Activated T-helper 2 cell treated with anti-CD3 and anti-CD28 coated beads, Interferon-gamma antibody, Interleukin-2, Interleukin-4, amounts not matched to agents 10 μg/mL and 5 μg/mL and 100 μg/mL, durations not matched to agents 14 hours and 24 hours and 36 hours (primary cell): ENCODE measurements at regions of chr4 and their contacts with region 1.

Region 1: DNA sequence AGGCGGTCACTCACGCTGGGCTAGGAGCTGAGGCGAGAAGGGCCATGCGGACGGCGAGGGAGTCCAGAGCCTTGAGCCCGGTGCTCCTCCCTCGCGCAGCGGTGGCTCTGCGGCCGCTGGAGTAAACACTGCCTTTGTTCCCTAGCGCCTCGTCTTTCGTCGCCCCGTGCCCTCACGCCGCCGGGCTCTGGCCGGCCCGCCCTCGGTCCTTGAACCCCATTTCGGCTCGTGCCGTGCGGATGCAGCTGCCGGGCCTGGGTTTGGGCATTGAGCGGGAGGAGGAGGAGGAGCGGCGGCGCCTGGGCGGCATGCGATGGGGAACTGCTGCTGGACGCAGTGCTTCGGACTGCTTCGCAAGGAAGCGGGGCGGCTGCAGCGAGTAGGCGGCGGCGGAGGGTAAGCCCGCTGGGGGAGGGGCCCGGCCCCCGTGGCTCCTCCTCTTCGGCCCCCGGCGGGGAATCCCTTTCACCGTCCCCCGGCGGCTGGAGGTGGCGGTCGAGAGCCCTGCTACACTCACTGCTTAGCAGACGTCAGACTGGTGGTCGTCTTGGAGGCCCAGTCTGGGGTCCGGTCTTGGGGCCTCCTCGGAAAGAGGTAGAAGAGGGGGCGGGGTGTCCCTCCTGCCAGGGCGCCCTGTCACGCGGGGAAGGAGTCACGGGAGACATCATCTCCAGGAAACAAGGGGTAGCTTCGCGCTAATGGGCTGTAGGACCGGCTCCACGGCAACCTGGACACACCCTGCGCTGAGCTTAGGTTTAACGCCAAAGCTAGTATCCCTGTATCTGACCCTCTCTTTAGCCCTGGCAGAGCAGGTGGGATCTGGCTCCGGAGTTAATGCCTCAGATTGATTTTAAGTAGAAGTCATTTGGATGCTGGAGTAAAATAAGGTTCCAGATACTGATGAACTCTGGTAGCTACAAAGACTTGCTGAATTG is at the start of gene AP1AR:
- DNase-seq: peak; percentile 77
- H3K4me3 Mint-ChIP-seq: peak within 1 kb of the TSS; percentile 90
- H3K27ac Mint-ChIP-seq: peak within 1 kb of the TSS; percentile 94
- H3K4me1 Mint-ChIP-seq: peaks cover 32% of the 10 kb centered on the region
- H3K27me3 Mint-ChIP-seq: peaks cover 6% of the 10 kb centered on the region
- total RNA-seq, gene AP1AR: 19.3 and 21.7 TPM in 2 replicates

Region 2: DNA sequence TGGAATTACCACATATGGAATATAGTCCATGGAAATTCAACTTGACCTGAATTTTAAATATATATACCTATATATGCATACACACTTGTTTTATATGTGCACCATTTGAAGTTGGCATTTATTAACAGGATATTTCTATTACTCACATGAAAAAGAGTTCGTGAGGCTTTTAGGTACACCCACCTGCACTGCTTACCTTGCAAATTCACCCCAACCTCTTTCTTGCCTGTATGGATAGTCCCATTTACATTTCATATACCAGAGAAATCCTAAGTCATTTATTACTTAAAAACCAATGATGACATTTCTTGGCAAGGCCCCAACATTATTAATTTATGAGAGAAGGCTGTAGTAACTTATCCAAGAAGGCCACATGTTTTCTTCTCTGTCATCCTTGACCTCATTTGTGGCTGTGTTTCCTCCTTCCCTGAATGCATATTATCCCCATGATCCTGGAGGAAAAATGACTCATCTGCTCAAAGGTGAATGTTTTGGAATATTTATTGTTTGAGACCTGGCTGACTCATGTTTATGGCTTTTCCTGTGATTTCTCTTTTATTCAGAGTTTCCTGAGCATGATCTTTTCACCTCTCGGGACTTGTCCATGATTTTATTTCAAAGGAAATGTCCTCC is 149.0 kb before region 1 on chr4:
- intact Hi-C with region 1: no loop called
- DNase-seq: no peak
- H3K4me3 Mint-ChIP-seq: no peak overlapping the region
- H3K27ac Mint-ChIP-seq: no peak overlapping the region
- H3K4me1 Mint-ChIP-seq: peaks cover 7% of the 10 kb centered on the region
- H3K27me3 Mint-ChIP-seq: peaks cover 26% of the 10 kb centered on the region

Region 3: DNA sequence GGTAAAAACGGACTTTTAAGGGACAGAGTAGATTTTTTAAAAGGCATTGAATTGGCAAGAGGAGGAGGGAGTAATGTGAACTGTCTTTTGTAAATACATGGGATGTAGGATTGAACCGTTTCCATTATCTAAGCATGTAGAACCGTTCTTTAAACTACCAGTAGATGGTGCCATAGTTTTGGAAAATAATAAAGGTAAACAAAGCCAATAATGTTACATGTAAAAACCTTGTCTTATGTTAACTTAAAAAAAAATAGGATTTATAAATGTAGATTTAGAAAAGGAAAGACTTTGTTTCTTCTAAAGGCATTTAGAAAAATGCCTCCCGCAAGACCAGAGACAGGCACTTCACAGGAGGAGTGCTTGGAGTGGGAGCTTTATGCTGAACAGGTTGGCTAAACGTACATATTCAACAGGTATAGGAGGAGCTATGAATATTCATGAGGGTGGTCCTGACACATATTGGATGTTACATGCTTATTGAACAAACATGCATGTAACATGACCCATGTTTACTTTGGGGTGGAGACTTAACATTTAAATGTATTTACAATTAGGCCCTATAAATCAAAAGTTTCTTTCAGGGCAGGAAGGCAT is 132.2 kb before region 1 on chr4:
- intact Hi-C with region 1: loop called (anchors 1 kb)
- DNase-seq: no peak
- H3K4me3 Mint-ChIP-seq: no peak overlapping the region
- H3K27ac Mint-ChIP-seq: no peak overlapping the region
- H3K4me1 Mint-ChIP-seq: peaks cover 5% of the 10 kb centered on the region
- H3K27me3 Mint-ChIP-seq: peaks cover 22% of the 10 kb centered on the region

Region 4: GRCh38 chr4:112145820-112146813 is 85.9 kb before region 1 on chr4:
- intact Hi-C with region 1: loop called (anchors 1 kb)
- DNase-seq: peak; percentile 44
- H3K4me3 Mint-ChIP-seq: peak overlapping the region; percentile 85
- H3K27ac Mint-ChIP-seq: peak overlapping the region; percentile 92
- H3K4me1 Mint-ChIP-seq: peaks cover 35% of the 10 kb centered on the region
- H3K27me3 Mint-ChIP-seq: no peaks in the 10 kb centered on the region

Region 5: DNA sequence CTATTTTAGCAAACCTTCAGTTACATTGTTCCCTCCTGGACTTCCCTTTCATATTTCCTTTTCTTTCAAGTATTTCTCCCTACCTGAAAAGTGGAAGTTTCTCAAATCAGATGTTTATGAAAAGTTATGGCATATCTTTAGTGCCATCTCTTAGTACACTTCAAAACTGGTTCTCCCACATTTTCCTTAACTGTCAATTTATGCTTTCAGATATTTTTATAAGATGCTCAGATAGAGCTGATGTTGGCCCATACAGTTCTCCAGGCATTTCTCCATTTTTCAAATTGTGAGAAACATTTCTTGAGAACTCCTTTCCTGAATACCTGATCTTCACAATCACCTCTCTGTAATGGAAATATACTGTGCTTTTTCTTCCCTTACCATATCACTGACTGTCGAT is 33.0 kb before region 1 on chr4:
- intact Hi-C with region 1: loop called (anchors 1 kb)
- DNase-seq: no peak
- H3K4me3 Mint-ChIP-seq: no peak overlapping the region
- H3K27ac Mint-ChIP-seq: no peak overlapping the region
- H3K4me1 Mint-ChIP-seq: peaks cover 17% of the 10 kb centered on the region
- H3K27me3 Mint-ChIP-seq: peaks cover 2% of the 10 kb centered on the region

Region 6: DNA sequence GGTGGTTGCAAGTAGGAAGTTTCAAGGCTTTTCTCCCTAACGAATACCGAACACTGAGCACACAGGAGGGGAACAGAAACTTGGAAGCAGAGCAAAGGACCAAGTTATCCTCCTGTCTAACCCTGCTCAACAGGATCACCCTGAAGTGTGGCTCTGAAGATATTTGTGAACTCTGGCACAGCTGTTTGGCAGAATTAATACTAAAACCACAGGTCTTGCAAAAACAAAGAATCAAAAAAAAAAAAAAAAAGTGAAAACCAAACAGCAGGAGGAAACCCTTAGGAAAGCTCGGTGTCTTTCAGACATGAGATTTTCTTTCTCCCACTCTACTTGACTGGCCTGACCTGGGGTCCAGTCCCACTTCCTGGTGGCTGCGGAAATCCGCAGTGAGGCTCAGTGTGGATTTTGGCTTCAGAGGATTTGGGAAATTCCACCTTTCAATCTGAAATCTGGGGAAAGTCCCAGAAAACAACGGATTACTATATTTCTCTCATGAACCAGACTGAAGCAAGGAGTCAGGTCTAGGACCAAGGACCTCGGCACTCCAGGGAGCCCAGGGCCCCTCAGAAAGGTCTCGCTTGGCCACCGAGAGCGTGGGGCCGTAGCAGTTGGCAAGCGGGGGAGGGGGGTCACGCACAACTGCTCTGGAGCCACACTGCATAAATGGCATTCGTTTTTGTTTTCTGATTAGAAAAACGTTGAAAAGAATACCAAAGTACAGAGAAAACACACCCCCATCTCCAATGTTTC is 52.8 kb after region 1 on chr4:
- intact Hi-C with region 1: loop called (anchors 1 kb)
- DNase-seq: no peak
- H3K4me3 Mint-ChIP-seq: peak overlapping the region; percentile 86
- H3K27ac Mint-ChIP-seq: peak overlapping the region; percentile 78
- H3K4me1 Mint-ChIP-seq: peaks cover 63% of the 10 kb centered on the region
- H3K27me3 Mint-ChIP-seq: no peaks in the 10 kb centered on the region

Region 7: DNA sequence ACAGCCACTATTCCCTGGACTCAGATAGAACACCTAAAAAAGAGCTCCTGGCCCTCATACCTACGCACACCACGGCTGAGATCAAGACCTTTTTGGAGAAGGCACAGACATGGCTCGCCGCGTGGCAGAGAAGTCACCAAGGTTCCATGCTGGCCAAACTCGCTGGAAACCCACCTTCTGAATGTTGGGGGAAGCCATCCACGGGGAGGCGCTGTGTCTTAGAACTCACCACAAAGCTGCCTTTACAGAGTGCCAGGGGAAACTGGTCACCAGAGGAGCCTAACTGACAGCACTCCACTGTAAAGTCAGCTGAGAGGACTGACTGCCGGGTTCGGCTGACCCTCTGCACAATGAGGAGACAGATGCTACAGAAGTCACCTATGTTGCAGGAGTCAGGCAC is 186.0 kb after region 1 on chr4:
- intact Hi-C with region 1: no loop called
- DNase-seq: no peak
- H3K4me3 Mint-ChIP-seq: no peak overlapping the region
- H3K27ac Mint-ChIP-seq: no peak overlapping the region
- H3K4me1 Mint-ChIP-seq: no peaks in the 10 kb centered on the region
- H3K27me3 Mint-ChIP-seq: no peaks in the 10 kb centered on the region

Region 8: DNA sequence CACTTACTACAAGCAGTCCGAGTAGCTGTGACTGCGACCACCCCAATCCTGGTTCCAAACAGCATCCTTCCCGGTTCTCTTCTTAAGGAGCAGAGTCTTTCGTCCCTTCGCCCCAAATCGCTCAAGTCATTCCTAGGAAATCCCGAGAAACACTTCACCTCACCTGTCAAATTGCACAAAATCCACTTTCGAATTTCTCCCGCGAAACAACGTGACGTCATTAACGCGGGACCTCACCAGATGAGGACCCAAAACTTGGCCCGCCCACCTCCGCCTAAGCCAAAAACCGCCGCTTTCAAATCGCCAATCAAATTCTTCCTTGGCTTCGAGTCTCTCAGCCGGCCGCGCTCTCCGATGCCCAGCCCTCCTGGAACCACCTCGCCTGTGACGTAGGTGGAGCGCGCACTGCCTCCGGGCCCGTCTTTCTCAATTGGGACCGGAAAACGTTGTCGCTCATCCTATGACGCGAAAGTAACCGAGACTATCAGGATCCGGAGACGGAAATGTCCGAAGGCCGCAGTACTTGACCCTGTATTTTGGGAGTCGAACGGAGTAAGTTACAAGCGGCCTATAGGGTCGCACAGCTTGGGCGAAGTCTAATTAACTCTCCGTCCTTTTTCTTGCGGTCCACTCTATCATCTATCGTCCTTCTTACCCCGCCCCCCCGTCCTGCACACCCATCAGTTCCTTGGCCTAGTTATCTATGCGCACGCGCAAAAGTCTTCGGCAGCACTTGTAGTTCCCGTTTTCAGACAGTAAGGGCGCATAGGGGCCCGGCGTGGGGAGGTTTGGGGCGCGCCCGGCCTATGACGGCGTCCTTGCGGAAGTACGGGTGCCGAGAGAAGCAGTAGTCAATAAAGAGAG is 404.9 kb after region 1 on chr4 and contains the starts of genes LARP7 and ZGRF1:
- intact Hi-C with region 1: loop called (anchors 1 kb)
- DNase-seq: peak; percentile 97
- H3K4me3 Mint-ChIP-seq: no peak within 1 kb of the TSS
- H3K27ac Mint-ChIP-seq: no peak within 1 kb of the TSS
- H3K4me1 Mint-ChIP-seq: peaks cover 29% of the 10 kb centered on the region
- H3K27me3 Mint-ChIP-seq: no peaks in the 10 kb centered on the region
- total RNA-seq, gene LARP7: 44.0 and 45.3 TPM in 2 replicates
- total RNA-seq, gene ZGRF1: 30.0 and 30.4 TPM in 2 replicates